GM12878 (cell line): ENCODE measurements at regions of chr17 and their contacts with region 1.

Region 1: GRCh38 chr17:64635647-64636307 is 26.3 kb downstream of the SMURF2 start:
- DNase-seq: peak; percentile 62
- ATAC-seq: peak; percentile 88
- H3K4me3 ChIP-seq: no peak overlapping the region
- H3K27ac ChIP-seq: peak overlapping the region; percentile 63
- H3K4me1 ChIP-seq: peaks cover 21% of the 10 kb centered on the region
- H3K27me3 ChIP-seq: no peaks in the 10 kb centered on the region
- CTCF ChIP-seq: no peak
- EP300 ChIP-seq: peak; percentile 90; a peak in 3 of 4 replicates
- POLR2A ChIP-seq: no peak
- RAD21 ChIP-seq: no peak

Region 2: GRCh38 chr17:64145757-64146417 is 489.9 kb before region 1 on chr17:
- CTCF ChIA-PET with region 1: no interaction called
- POLR2A ChIA-PET with region 1: interaction called, 10 read pairs
- RAD21 ChIA-PET with region 1: no interaction called
- SMC1A ChIA-PET with region 1: no interaction called
- in situ Hi-C with region 1: no loop called
- intact Hi-C with region 1: no loop called
- DNase-seq: peak; percentile 97
- ATAC-seq: peak; percentile 95
- H3K4me3 ChIP-seq: peak overlapping the region; percentile 79
- H3K27ac ChIP-seq: peak overlapping the region; percentile 94
- H3K4me1 ChIP-seq: peaks cover 3% of the 10 kb centered on the region; the same call in 1 of the 2 replicates
- H3K27me3 ChIP-seq: no peaks in the 10 kb centered on the region
- CTCF ChIP-seq: no peak
- EP300 ChIP-seq: no peak
- POLR2A ChIP-seq: peak; percentile 98
- RAD21 ChIP-seq: no peak

Region 3: DNA sequence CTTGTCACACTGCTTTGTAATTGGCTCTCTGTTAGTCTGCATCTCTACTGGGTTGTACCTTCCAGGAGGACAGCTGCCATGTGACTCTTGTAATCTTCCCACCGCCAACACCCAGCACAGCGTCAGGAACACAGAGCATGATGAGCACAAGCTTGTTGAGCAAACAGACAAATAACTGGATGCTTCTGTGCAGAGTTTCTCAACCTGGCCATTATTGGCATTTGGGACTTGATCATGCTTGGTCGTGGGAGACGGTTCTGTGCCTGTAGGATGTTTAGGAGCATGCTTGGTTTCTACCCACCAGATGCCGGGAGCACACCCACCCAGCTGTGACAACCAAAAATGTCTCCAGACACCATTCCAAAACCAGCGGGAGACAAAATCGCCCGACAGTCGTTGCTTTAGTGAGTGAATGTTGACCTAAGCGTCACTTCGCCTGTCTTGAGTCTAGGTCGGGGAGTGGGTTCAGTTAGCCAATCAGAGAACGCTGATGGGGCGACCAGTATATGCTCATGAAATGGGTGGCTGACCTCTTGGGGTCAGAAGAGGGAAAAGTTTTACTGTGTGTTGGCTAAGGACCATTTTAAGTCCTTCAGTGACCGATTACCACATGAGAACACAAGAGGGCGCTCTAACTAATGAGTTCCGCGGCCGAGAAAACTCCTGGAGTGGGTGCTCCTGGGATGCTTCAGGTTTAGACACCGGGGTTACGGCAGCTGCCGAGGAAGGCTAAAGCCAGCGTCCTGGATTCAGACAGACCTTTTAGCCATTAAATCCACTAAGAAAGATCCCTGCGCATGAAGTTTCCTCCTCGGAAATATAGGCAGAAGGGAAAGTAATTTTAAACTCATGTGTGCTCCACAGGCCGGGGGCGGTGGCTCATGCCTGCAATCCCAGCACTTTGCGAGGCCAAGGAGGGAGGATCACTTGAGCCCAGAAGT is 314.9 kb before region 1 on chr17:
- CTCF ChIA-PET with region 1: interaction called, 3 read pairs
- POLR2A ChIA-PET with region 1: no interaction called
- RAD21 ChIA-PET with region 1: no interaction called
- SMC1A ChIA-PET with region 1: interaction called, 3 read pairs
- in situ Hi-C with region 1: loop called (anchors 5 kb)
- intact Hi-C with region 1: no loop called
- DNase-seq: no peak
- ATAC-seq: peak; percentile 82
- H3K4me3 ChIP-seq: no peak overlapping the region
- H3K27ac ChIP-seq: no peak overlapping the region
- H3K4me1 ChIP-seq: no peaks in the 10 kb centered on the region
- H3K27me3 ChIP-seq: no peaks in the 10 kb centered on the region; a peak in 1 of 4 replicates
- CTCF ChIP-seq: peak; percentile 71 to 78 (median 75)
- EP300 ChIP-seq: no peak
- POLR2A ChIP-seq: no peak
- RAD21 ChIP-seq: peak; percentile 84

Region 4: GRCh38 chr17:64599187-64599676 is 36.5 kb before region 1 on chr17:
- CTCF ChIA-PET with region 1: no interaction called
- POLR2A ChIA-PET with region 1: interaction called, 3 read pairs
- RAD21 ChIA-PET with region 1: no interaction called
- SMC1A ChIA-PET with region 1: interaction called, 4 read pairs
- in situ Hi-C with region 1: no loop called
- intact Hi-C with region 1: loop called (anchors 5 kb)
- DNase-seq: no peak
- ATAC-seq: peak; percentile 98
- H3K4me3 ChIP-seq: peak overlapping the region; percentile 37; the same call in 1 of the 2 replicates
- H3K27ac ChIP-seq: peak overlapping the region; percentile 76
- H3K4me1 ChIP-seq: peaks cover 4% of the 10 kb centered on the region; the same call in 1 of the 2 replicates
- H3K27me3 ChIP-seq: no peaks in the 10 kb centered on the region
- CTCF ChIP-seq: no peak
- EP300 ChIP-seq: no peak
- POLR2A ChIP-seq: peak; percentile 66
- RAD21 ChIP-seq: no peak

Region 5: DNA sequence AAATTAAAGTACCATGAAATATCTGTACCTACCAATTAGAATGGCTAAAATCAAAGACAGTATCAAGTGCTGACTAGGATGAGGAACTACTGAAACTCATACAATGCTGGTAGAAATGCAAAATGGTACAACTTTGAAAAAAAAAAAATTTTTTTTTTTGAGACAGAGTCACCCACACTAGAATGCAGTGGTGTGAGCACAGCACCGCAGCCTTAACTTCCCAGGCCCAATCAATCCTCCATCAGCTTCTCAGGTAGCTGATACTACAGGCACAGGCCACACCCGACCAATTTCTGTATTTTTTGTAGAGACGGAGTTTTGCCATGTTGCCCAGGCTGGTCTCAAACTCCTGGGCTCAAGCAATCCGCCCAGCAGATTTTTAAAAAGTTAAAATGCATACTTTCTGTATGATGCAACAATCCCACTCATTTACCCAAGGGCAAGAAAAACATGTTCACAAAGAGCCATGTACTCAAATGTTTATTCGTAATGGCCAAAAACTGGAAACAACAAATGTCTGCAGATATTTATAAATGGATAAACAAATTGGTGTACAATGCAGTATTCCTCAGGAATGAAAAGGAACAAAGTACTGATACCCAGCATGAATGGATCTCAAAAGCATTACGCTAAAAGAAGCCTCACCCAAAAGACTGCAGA is 17.7 kb after region 1 on chr17:
- CTCF ChIA-PET with region 1: interaction called, 13 read pairs
- POLR2A ChIA-PET with region 1: interaction called, 4 read pairs
- RAD21 ChIA-PET with region 1: interaction called, 4 read pairs
- SMC1A ChIA-PET with region 1: interaction called, 19 read pairs
- in situ Hi-C with region 1: no loop called
- intact Hi-C with region 1: no loop called
- DNase-seq: no peak
- ATAC-seq: no peak
- H3K4me3 ChIP-seq: no peak overlapping the region
- H3K27ac ChIP-seq: no peak overlapping the region
- H3K4me1 ChIP-seq: peaks cover 6% of the 10 kb centered on the region
- H3K27me3 ChIP-seq: no peaks in the 10 kb centered on the region
- CTCF ChIP-seq: no peak
- EP300 ChIP-seq: no peak
- POLR2A ChIP-seq: no peak
- RAD21 ChIP-seq: no peak